PC-9 (cell line): ENCODE measurements at regions of chr3 and their contacts with region 1.

Region 1: DNA sequence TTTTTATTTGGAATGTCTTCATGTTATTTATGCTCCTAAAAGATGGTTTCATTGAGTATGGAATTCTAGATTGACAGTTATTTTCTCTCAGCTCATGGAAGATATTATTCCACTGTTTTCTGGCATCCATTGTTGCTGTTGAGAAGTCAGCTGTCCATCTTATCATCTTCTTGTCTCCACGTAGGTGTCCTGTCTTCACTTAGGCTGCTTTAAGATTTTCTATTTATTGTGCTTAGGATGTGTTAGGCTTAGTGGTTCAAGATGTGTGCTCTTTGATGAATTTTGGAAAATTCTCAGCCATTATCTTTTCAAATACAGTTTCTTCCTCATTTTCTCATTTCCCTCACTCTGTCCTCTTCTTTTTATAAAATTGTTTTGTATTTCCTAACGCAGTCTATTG is 52.0 kb downstream of the SNRK start:
- DNase-seq: no peak
- H3K4me3 ChIP-seq: no peak overlapping the region
- H3K27ac ChIP-seq: no peak overlapping the region
- H3K4me1 ChIP-seq: no peaks in the 10 kb centered on the region
- H3K27me3 ChIP-seq: no peaks in the 10 kb centered on the region
- CTCF ChIP-seq: no peak

Region 2: GRCh38 chr3:43348852-43349574 is 10.7 kb after region 1 on chr3:
- CTCF ChIA-PET with region 1: interaction called, 15 read pairs
- POLR2A ChIA-PET with region 1: no interaction called
- intact Hi-C with region 1: no loop called
- DNase-seq: no peak
- H3K4me3 ChIP-seq: no peak overlapping the region
- H3K27ac ChIP-seq: no peak overlapping the region
- H3K4me1 ChIP-seq: no peaks in the 10 kb centered on the region
- H3K27me3 ChIP-seq: no peaks in the 10 kb centered on the region
- CTCF ChIP-seq: no peak

Region 3: GRCh38 chr3:43733459-43734384 is 395.4 kb after region 1 on chr3:
- CTCF ChIA-PET with region 1: no interaction called
- POLR2A ChIA-PET with region 1: no interaction called
- intact Hi-C with region 1: no loop called
- DNase-seq: no peak
- H3K4me3 ChIP-seq: no peak overlapping the region
- H3K27ac ChIP-seq: no peak overlapping the region
- H3K4me1 ChIP-seq: peaks cover 14% of the 10 kb centered on the region
- H3K27me3 ChIP-seq: no peaks in the 10 kb centered on the region
- CTCF ChIP-seq: no peak